AG04450 (cell line): ENCODE measurements at regions of chr2 and their contacts with region 1.

Region 1: GRCh38 chr2:33158482-33159003 is 211.8 kb downstream of the LTBP1 start:
- DNase-seq: peak; percentile 65
- H3K4me3 ChIP-seq: no peak overlapping the region
- H3K27ac ChIP-seq: peak overlapping the region; percentile 95
- H3K27me3 ChIP-seq: no peaks in the 10 kb centered on the region
- CTCF ChIP-seq: no peak

Region 2: DNA sequence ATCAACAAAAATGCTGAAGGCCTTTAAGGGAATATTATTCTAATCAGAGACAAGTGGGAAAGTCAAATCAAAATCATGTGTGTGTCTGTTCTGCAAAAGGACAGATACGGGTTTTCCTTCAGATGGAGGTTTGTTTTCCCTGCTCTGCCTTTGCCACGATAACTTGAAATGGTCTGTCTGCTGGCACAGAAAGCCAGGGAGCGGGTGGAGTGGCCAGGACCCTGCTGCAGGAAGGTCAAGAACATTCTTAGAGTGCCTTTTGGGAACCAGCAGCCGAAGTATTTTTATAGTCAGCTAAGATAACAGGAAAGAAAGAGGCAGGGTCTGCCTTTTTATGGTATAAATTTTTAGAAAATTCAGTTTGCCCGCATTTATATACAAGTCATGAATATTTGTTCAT is 22.4 kb after region 1 on chr2:
- CTCF ChIA-PET with region 1: no interaction called
- POLR2A ChIA-PET with region 1: no interaction called
- DNase-seq: no peak
- H3K4me3 ChIP-seq: no peak overlapping the region
- H3K27ac ChIP-seq: no peak overlapping the region
- H3K27me3 ChIP-seq: no peaks in the 10 kb centered on the region
- CTCF ChIP-seq: no peak

Region 3: GRCh38 chr2:33215299-33215698 is 56.8 kb after region 1 on chr2:
- CTCF ChIA-PET with region 1: interaction called, 3 read pairs
- POLR2A ChIA-PET with region 1: interaction called, 10 read pairs
- DNase-seq: peak; percentile 78
- H3K4me3 ChIP-seq: no peak overlapping the region
- H3K27ac ChIP-seq: peak overlapping the region; percentile 94
- H3K27me3 ChIP-seq: no peaks in the 10 kb centered on the region
- CTCF ChIP-seq: no peak